CD14-positive monocyte (primary cell): ENCODE measurements at regions of chr20 and their contacts with region 1.

Region 1: DNA sequence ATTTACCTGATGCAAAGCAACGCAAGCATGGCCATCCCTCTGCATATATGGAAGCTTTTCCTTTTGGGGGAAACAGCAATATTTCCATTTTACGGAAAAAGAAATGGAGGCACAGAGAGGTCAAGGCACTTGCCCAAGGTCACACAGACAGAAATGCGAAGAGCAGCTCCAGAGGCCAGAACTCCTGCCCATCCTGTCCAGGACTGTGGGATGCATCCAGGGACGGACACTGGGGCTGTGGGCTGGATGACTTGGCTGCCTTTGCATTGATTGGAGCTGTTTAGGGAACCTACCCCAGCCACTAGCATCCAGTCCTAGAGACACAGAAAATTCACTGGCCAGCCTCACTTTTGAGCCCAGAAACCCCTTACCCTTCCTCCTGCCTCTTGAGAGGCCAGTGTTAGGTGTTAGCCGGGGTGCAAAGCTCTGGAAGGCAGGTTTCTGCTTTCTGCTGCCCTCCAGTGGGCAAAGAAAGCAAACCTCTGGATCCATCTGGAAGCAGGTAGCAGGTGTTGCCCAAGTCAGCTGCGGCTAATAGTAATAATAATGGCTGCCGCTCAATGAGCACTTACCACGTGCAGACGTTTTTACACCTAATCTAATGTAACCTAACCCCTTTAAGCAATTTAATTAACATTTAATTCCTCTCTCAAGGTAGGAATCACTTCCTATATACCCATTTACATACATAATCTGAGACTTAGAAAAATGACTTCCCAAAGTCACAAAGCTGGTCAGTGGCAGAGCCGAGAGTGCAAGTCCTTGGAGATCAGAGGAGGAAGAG is 31.7 kb upstream of the CCN5 start:
- DNase-seq: peak; percentile 52 to 57 (median 56)
- H3K4me3 ChIP-seq: no peak overlapping the region
- H3K4me3 Mint-ChIP-seq: no peak overlapping the region
- H3K27ac ChIP-seq: no peak overlapping the region
- H3K27ac Mint-ChIP-seq: no peak overlapping the region
- H3K4me1 ChIP-seq: no peaks in the 10 kb centered on the region
- H3K4me1 Mint-ChIP-seq: peaks cover 3% of the 10 kb centered on the region
- H3K27me3 ChIP-seq: no peaks in the 10 kb centered on the region
- H3K27me3 Mint-ChIP-seq: peaks cover 0 to 3% (median 2%) of the 10 kb centered on the region in 3 donors
- CTCF ChIP-seq: peak; percentile 78

Region 2: DNA sequence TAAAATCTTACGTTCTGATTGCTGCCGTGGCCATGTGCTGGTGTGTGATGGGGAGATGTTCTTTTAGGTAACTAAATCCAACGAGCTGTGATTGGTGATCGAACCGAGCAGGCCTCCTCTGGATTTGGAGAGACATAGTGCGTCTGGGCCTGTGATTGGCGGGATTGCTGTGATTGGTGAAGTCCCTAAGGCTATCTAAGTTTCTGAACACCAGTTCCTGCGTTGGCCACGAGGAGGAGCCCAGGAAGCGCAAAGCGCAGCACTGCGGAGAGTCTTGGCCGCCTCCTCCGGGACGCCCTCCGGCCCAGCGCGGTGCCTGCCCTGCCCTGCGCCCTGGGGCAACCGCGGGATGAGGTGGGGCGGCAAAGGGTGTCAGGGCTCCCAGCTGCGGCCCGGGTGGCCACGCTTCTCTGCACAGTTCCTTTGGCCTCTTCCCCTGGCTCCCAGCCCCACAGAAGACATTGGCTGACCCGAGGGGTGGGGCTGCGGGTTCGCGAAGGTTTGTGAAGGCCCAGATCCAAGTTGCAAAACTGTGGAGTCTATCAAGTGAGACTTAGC is 294.9 kb before region 1 on chr20:
- intact Hi-C with region 1: loop called in 1 of 2 experiments (anchors 5 kb)
- DNase-seq: peak; percentile 32 to 61 (median 45)
- H3K4me3 ChIP-seq: no peak overlapping the region
- H3K4me3 Mint-ChIP-seq: peak overlapping the region in 1 of 2 donors; percentile 70
- H3K27ac ChIP-seq: no peak overlapping the region
- H3K27ac Mint-ChIP-seq: no peak overlapping the region
- H3K4me1 ChIP-seq: peaks cover 0 to 6% of the 10 kb centered on the region in 2 donors
- H3K4me1 Mint-ChIP-seq: peaks cover 6% of the 10 kb centered on the region
- H3K27me3 ChIP-seq: peaks cover 0 to 7% of the 10 kb centered on the region in 2 donors
- H3K27me3 Mint-ChIP-seq: peaks cover 12 to 17% (median 17%) of the 10 kb centered on the region in 3 donors
- CTCF ChIP-seq: peak; percentile 86

Region 3: DNA sequence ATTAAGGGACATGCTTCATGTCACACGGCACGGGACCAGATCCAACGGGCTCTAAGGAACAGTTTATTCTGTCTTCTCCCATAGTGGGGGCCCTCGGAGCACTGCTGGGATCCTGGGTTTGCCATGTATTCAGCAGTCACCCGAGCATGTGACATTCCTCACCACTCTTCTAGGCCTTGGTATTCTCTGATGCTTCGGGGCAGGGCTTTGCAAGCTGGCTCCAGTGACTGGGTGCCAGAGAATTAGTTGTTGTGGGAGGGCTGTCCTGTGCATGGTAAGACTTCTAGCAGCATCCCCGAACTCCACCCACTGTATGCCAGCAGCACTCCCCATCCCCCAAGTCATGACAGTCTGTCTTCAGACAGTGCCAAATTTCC is 37.1 kb after region 1 on chr20:
- intact Hi-C with region 1: no loop called
- DNase-seq: no peak
- H3K4me3 ChIP-seq: no peak overlapping the region
- H3K4me3 Mint-ChIP-seq: no peak overlapping the region
- H3K27ac ChIP-seq: no peak overlapping the region
- H3K27ac Mint-ChIP-seq: no peak overlapping the region
- H3K4me1 ChIP-seq: no peaks in the 10 kb centered on the region
- H3K4me1 Mint-ChIP-seq: peaks cover 3% of the 10 kb centered on the region
- H3K27me3 ChIP-seq: no peaks in the 10 kb centered on the region
- H3K27me3 Mint-ChIP-seq: peaks cover 0 to 9% (median 3%) of the 10 kb centered on the region in 3 donors
- CTCF ChIP-seq: no peak

Region 4: DNA sequence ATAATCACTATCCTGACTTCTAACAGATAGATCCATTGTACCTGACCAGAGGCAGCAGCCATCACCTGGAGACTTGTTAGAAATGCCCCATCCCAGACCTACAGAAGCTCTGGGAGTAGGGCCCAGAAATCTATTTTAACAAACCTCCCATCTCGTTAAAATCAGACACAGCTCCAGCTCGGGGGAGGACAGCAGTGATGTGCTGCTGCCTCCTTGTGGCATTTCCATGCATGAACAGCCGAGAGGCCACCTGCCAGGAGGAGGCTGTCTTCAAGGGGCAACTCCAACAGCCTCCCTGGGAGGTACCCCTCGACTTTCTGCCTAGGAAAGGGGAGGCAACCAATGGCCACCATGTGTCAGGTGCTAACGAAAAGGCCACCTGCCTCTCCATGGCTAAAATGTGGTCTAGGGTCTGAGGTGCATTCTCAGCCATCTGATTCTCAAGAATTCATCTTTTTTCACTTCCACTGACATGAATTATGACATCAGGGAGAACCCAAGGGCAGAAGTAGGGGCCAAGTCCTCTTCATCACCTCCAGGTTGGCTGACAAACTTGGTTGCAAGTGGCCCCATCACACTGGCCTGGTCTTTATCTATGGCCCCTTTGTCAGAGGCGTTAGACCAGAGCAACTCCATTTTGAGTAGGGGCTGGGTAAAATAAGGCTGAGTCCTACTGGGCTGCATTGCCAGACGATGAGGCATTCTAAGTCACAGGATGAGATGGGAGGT is 50.0 kb after region 1 on chr20:
- intact Hi-C with region 1: loop called (anchors 5 kb)
- DNase-seq: peak; percentile 15 to 51 (median 37)
- H3K4me3 ChIP-seq: no peak overlapping the region
- H3K4me3 Mint-ChIP-seq: no peak overlapping the region
- H3K27ac ChIP-seq: no peak overlapping the region
- H3K27ac Mint-ChIP-seq: peak overlapping the region in 1 of 7 donors; percentile 36
- H3K4me1 ChIP-seq: peaks cover 6 to 7% of the 10 kb centered on the region in 2 donors
- H3K4me1 Mint-ChIP-seq: peaks cover 15% of the 10 kb centered on the region
- H3K27me3 ChIP-seq: no peaks in the 10 kb centered on the region
- H3K27me3 Mint-ChIP-seq: peaks cover 0 to 6% (median 2%) of the 10 kb centered on the region in 3 donors
- CTCF ChIP-seq: peak; percentile 77

Region 5: DNA sequence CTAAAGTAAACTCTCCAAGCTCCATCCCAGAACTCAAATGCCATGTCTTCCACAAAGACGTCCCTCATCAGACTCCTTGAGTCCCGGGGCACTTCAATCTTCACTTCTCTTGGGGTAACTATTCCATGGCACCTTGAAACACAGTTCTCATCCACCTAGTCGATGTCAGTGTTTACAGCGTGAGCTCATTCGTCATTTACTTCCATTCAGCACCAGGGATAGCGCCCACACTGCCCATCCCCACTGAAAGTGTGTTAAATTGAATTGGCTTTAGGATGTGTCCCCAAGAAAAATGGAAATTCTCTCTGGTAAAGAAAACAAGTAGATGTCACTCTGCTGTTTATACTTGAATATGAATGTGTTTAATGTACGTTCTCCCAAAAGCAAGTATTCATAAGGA is 93.5 kb after region 1 on chr20:
- intact Hi-C with region 1: no loop called
- DNase-seq: no peak
- H3K4me3 ChIP-seq: no peak overlapping the region
- H3K4me3 Mint-ChIP-seq: no peak overlapping the region
- H3K27ac ChIP-seq: no peak overlapping the region
- H3K27ac Mint-ChIP-seq: no peak overlapping the region
- H3K4me1 ChIP-seq: no peaks in the 10 kb centered on the region
- H3K4me1 Mint-ChIP-seq: no peaks in the 10 kb centered on the region
- H3K27me3 ChIP-seq: no peaks in the 10 kb centered on the region
- H3K27me3 Mint-ChIP-seq: peaks cover 0 to 2% (median 0%) of the 10 kb centered on the region in 3 donors
- CTCF ChIP-seq: no peak

Region 6: GRCh38 chr20:44866703-44867335 is 183.4 kb after region 1 on chr20:
- intact Hi-C with region 1: loop called (anchors 2 to 5 kb)
- DNase-seq: peak in 2 of 3 donors; percentile 38 to 79
- H3K4me3 ChIP-seq: peak overlapping the region in 1 of 3 experiments; percentile 42
- H3K4me3 Mint-ChIP-seq: peak overlapping the region in 1 of 2 donors; percentile 57
- H3K27ac ChIP-seq: no peak overlapping the region
- H3K27ac Mint-ChIP-seq: peak overlapping the region in 1 of 7 donors; percentile 53
- H3K4me1 ChIP-seq: peaks cover 6 to 12% of the 10 kb centered on the region in 2 donors
- H3K4me1 Mint-ChIP-seq: peaks cover 16% of the 10 kb centered on the region
- H3K27me3 ChIP-seq: no peaks in the 10 kb centered on the region
- H3K27me3 Mint-ChIP-seq: peaks cover 0 to 16% (median 7%) of the 10 kb centered on the region in 3 donors
- CTCF ChIP-seq: no peak